ENCODE measurements at regions of chr10 and their contacts with region 1.

Region 1: DNA sequence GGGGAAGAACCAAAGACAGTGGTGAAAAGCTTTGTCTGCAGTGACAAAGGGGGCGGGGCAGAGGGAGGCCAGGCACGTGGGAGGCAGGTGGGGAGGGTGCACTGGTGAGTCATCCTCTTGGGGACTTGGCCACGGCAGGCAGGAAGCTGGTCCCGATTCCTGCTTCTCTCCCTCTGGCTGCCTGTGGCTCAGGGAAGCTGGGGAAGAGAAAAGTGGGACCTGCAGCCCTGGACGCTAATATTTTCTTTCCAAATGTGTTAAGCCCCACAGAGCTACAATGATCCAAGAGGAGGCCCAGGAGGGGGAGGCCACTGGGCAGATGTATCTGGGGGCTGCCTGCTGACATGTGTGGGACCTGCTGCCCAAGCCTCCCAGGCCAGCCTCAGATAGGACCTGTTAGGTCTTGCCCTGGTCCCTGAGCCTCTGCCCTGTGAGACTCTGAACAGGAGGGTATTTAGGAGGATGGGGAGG is 231.8 kb downstream of the KCNMA1 start:
- DNase-seq: peak; percentile 89

Region 2: DNA sequence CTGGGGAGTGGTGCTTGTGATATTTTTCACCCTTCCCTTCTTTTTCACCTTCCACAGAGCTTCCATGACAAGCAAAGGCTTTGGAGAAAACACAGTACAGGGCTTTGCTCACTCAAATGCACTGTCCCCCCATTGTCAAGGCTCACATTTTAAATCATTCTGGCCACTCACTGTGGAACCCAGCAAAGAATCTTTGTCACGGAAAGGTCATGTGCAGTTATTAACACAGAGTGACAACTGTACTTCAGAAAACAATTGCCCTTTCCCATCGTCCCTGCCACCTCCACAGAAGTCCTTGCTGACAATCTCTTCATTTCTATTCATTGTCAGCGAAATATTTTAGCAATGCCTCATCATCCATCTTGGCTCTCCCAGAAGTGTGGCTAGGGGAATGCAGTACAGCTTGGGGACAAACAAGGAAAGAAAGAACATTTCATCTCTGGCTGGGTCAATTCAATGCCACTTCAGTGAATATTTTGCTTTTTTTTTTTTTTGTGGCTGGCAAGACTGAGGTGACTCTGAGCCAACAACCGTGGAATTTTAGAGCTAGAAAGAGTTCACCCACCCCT is 619.2 kb before region 1 on chr10:
- intact Hi-C with region 1: loop called in 1 of 2 experiments (anchors 10 kb)
- DNase-seq: no peak

Region 3: DNA sequence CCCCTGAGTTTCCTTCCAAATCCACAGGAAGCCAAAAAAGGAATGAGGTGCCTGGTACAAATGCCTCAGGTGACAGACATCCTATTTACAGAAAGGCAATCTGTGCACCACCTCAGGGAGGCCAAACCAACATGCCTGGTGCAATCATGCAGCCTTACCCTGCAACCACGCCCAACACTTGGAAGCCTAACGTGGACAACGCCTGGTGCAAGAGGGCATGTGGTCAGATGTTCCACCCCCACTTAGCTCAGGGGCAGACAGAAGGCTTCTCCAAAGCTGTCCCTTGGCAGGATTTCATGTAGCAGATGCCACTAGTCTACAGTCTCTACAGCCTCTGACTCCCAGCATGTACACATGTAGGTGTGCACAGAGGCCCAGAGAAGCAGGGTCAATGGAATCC is 142.3 kb after region 1 on chr10:
- intact Hi-C with region 1: no loop called
- DNase-seq: no peak